GM18951 (cell line): ENCODE measurements at regions of chr10 and their contacts with region 1.

Region 1: DNA sequence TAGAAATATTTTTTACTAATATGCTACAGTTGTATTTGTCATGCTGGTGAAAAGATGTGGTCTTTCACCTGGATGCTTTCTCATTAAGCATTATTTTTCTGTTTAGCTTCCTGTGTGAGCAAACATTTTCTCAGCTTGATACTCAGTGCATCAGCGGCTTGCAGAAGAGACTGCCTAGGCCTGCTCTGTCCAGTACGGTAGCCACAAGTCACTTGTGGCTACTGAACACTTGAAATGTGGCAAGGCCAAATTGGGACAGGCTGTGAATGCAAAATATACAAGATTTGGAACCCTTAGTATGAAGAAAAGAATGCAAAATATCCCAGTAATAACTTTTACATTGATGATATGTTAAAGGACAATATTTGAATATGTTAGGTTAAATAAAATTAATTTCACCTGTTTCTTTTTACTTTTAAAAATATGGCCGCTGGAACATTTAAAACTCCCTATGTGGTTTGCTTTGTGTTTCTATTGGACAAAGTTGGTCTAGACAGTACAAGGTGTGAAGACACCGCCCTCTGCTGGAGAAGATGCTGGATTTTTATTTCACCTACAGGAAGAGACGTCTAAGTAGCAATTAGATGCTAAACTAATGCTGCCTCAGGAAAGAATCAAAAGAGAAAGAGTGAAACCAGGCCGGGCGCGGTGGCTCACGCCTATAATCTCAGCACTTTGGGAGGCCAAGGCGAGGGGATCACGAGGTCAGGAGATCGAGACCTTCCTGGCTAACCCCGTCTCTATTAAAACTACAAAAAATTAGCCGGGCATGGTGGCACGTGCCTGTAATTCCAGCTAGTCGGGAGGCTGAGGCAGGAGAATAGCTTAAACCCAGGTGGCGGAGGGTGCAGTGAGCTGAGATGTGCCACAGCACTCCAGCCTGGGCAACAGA is 5.3 kb downstream of the SRGN start:
- POLR2A ChIP-seq: no peak

Region 2: DNA sequence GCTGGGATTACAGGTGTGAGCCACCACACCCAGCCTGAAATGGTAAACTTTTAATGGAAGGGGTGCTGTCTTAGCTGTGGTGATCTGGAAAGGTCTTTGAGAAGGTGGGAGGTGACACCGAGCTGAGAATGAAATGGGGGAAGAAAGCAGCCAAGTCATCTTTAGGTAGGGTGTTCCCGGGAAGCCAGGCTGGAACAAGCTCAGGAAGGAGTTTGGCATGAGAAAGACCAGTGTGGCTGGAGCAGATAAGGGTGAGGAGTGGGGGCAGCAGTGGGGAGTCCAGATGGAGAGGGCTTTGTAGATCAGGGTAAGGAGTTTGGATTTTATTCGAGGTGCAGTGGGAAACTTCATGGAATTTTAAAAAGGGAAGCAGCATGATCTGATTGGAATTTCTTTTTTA is 74.6 kb before region 1 on chr10:
- in situ Hi-C with region 1: loop called (anchors 5 kb)
- POLR2A ChIP-seq: no peak